CD4-positive, alpha-beta T cell (primary cell): ENCODE measurements at regions of chr6 and their contacts with region 1.

Region 1: DNA sequence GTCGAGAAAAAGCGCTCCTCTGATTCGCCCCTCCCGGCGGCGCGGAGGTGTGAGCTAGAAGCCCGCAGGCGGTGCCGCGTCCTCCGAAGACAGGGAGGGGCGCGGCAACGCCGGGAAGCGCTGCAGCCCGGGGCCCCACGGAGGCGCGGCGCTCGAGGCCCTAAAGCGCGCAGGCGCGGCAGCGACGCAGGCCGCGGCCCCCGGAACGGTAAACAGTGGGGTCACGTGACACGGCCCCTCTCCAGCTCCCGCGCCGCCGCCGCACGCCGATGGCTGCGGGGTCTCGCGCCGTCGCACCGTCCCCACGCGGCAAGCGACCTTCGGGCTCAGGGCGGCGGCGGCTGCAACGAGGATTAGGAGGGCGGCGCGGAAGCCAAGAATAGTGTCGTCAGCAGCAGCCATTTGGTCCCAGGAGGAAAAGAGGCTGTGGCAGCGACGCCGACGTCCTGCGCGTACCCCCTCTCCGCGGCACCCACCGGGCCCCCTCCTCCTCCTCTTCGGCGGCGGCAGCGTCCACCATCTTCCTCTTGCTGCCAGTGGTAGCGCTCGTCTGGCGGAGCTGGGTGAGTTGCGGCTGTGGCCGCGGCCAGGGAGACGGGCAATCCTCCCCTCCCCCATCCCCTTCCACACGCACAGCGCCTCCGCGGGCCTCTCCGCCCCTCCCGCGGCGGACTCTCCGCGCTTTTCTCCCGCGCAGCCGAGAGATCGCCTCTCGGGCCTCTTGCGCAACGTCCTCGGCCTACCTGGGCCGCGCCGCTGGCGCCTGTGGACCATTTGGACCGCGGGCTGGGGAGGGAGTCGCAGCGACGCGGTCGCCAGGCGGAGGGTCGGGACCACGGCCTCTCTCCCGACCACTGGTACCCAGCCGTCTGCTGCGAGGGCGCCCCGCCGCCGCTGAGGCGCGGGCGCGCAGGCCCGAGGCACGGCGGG is at the start of gene PHF3:
- DNase-seq: peak; percentile 78 to 98 (median 88)
- ATAC-seq: peak; percentile 89
- H3K4me3 ChIP-seq: peak within 1 kb of the TSS; percentile 95
- H3K4me3 Mint-ChIP-seq: peak within 1 kb of the TSS; percentile 99
- H3K27ac ChIP-seq: peak within 1 kb of the TSS; percentile 93 to 97
- H3K27ac Mint-ChIP-seq: peak within 1 kb of the TSS; percentile 99
- H3K4me1 ChIP-seq: peaks cover 7% of the 10 kb centered on the region
- H3K4me1 Mint-ChIP-seq: peaks cover 56% of the 10 kb centered on the region
- H3K27me3 ChIP-seq: no peaks in the 10 kb centered on the region
- H3K27me3 Mint-ChIP-seq: no peaks in the 10 kb centered on the region
- CTCF ChIP-seq: no peak
- total RNA-seq, gene PHF3: 125 to 136 TPM

Region 2: DNA sequence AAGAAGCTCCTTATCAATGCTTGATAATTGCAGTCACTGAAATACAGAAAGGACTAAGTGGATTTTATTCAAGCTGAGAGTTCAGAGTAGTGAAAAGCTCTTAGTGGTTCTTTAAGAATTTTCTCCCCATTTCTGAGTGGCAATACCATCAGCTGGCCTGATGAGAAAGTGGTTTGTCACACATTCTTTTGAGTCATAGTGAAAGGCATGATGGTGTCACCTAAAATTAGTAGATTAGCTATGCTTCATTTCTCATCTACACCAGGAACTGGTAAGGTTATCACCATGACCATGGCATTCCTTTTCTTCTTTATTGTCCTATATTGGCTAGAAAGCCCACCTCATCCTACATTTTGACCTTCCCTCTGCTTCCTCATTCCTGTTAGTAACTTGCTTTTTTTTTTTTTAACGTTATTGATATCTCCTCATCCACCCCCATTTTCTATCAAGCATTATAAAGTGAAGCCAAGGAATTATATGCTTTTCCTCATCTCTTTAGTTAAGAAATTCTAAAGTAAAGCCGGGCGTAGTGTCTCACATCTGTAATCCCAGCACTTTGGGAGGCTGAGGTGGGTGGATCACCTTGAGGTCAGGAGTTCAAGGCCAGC is 131.0 kb before region 1 on chr6:
- CTCF ChIA-PET with region 1: no interaction called
- POLR2A ChIA-PET with region 1: no interaction called
- intact Hi-C with region 1: no loop called
- DNase-seq: no peak
- ATAC-seq: no peak
- H3K4me3 ChIP-seq: no peak overlapping the region
- H3K4me3 Mint-ChIP-seq: no peak overlapping the region
- H3K27ac ChIP-seq: no peak overlapping the region
- H3K27ac Mint-ChIP-seq: no peak overlapping the region
- H3K4me1 ChIP-seq: no peaks in the 10 kb centered on the region
- H3K4me1 Mint-ChIP-seq: no peaks in the 10 kb centered on the region
- H3K27me3 ChIP-seq: no peaks in the 10 kb centered on the region
- H3K27me3 Mint-ChIP-seq: peaks cover 10% of the 10 kb centered on the region
- CTCF ChIP-seq: no peak

Region 3: GRCh38 chr6:63571881-63572732 is 63.7 kb before region 1 on chr6 and contains the starts of genes LOC128125822 and PTP4A1:
- CTCF ChIA-PET with region 1: interaction called, 3 read pairs
- POLR2A ChIA-PET with region 1: interaction called, 107 read pairs
- intact Hi-C with region 1: loop called (anchors 1 kb)
- DNase-seq: peak; percentile 93 to 99 (median 96)
- ATAC-seq: peak; percentile 81
- H3K4me3 ChIP-seq: peak within 1 kb of the TSS; percentile 76
- H3K4me3 Mint-ChIP-seq: peak within 1 kb of the TSS; percentile 96
- H3K27ac ChIP-seq: peak within 1 kb of the TSS; percentile 96 to 97
- H3K27ac Mint-ChIP-seq: peak within 1 kb of the TSS; percentile 91
- H3K4me1 ChIP-seq: peaks cover 18% of the 10 kb centered on the region
- H3K4me1 Mint-ChIP-seq: peaks cover 45% of the 10 kb centered on the region
- H3K27me3 ChIP-seq: no peaks in the 10 kb centered on the region
- H3K27me3 Mint-ChIP-seq: no peaks in the 10 kb centered on the region
- CTCF ChIP-seq: no peak
- total RNA-seq, gene PTP4A1: 254 to 258 TPM

Region 4: GRCh38 chr6:63598049-63599036 is 37.5 kb before region 1 on chr6:
- CTCF ChIA-PET with region 1: interaction called, 18 read pairs
- POLR2A ChIA-PET with region 1: interaction called, 23 read pairs
- intact Hi-C with region 1: loop called in 1 of 2 experiments (anchors 5 kb)
- DNase-seq: peak; percentile 58 to 88 (median 67)
- ATAC-seq: peak; percentile 99
- H3K4me3 ChIP-seq: peak overlapping the region; percentile 53
- H3K4me3 Mint-ChIP-seq: peak overlapping the region; percentile 87
- H3K27ac ChIP-seq: no peak overlapping the region
- H3K27ac Mint-ChIP-seq: no peak overlapping the region
- H3K4me1 ChIP-seq: peaks cover 11% of the 10 kb centered on the region
- H3K4me1 Mint-ChIP-seq: peaks cover 15% of the 10 kb centered on the region
- H3K27me3 ChIP-seq: no peaks in the 10 kb centered on the region
- H3K27me3 Mint-ChIP-seq: peaks cover 18% of the 10 kb centered on the region
- CTCF ChIP-seq: peak; percentile 92

Region 5: GRCh38 chr6:63649847-63650265 is 14.0 kb after region 1 on chr6:
- CTCF ChIA-PET with region 1: interaction called, 5 read pairs
- POLR2A ChIA-PET with region 1: interaction called, 28 read pairs
- intact Hi-C with region 1: loop called in 1 of 2 experiments (anchors 2 kb)
- DNase-seq: no peak
- ATAC-seq: no peak
- H3K4me3 ChIP-seq: no peak overlapping the region
- H3K4me3 Mint-ChIP-seq: peak overlapping the region; percentile 42
- H3K27ac ChIP-seq: no peak overlapping the region
- H3K27ac Mint-ChIP-seq: no peak overlapping the region
- H3K4me1 ChIP-seq: peaks cover 15% of the 10 kb centered on the region
- H3K4me1 Mint-ChIP-seq: peaks cover 88% of the 10 kb centered on the region
- H3K27me3 ChIP-seq: no peaks in the 10 kb centered on the region
- H3K27me3 Mint-ChIP-seq: no peaks in the 10 kb centered on the region
- CTCF ChIP-seq: no peak

Region 6: GRCh38 chr6:63663147-63663877 is 27.5 kb after region 1 on chr6:
- CTCF ChIA-PET with region 1: no interaction called
- POLR2A ChIA-PET with region 1: interaction called, 23 read pairs
- intact Hi-C with region 1: no loop called
- DNase-seq: no peak
- ATAC-seq: no peak
- H3K4me3 ChIP-seq: no peak overlapping the region
- H3K4me3 Mint-ChIP-seq: no peak overlapping the region
- H3K27ac ChIP-seq: no peak overlapping the region
- H3K27ac Mint-ChIP-seq: no peak overlapping the region
- H3K4me1 ChIP-seq: peaks cover 24% of the 10 kb centered on the region
- H3K4me1 Mint-ChIP-seq: peaks cover 90% of the 10 kb centered on the region
- H3K27me3 ChIP-seq: no peaks in the 10 kb centered on the region
- H3K27me3 Mint-ChIP-seq: no peaks in the 10 kb centered on the region
- CTCF ChIP-seq: no peak

Region 7: GRCh38 chr6:63685446-63686379 is 49.9 kb after region 1 on chr6:
- CTCF ChIA-PET with region 1: interaction called, 4 read pairs
- POLR2A ChIA-PET with region 1: interaction called, 12 read pairs
- intact Hi-C with region 1: loop called in 1 of 2 experiments (anchors 5 kb)
- DNase-seq: peak in 2 of 14 experiments; percentile 20 to 34
- ATAC-seq: no peak
- H3K4me3 ChIP-seq: no peak overlapping the region
- H3K4me3 Mint-ChIP-seq: no peak overlapping the region
- H3K27ac ChIP-seq: no peak overlapping the region
- H3K27ac Mint-ChIP-seq: no peak overlapping the region
- H3K4me1 ChIP-seq: no peaks in the 10 kb centered on the region
- H3K4me1 Mint-ChIP-seq: peaks cover 56% of the 10 kb centered on the region
- H3K27me3 ChIP-seq: no peaks in the 10 kb centered on the region
- H3K27me3 Mint-ChIP-seq: no peaks in the 10 kb centered on the region
- CTCF ChIP-seq: no peak

Region 8: DNA sequence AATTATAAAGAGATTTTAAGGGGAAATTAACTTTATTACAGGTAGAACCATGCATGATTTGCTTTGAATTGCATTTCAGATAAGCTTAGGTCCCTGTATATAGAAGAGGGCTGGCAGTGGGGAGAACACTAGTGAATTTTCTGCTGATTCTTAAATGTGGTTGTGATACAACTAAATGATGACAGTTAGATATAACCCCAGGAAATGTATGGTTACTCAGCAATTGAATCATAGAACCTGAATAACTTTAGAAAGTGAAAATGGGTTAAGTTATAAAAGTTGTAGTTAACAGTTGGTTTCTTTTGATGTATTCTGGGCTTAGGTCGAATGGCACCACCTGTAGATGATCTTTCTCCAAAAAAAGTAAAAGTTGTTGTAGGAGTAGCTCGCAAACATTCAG is 69.9 kb after region 1 on chr6:
- CTCF ChIA-PET with region 1: no interaction called
- POLR2A ChIA-PET with region 1: interaction called, 4 read pairs
- intact Hi-C with region 1: loop called in 1 of 2 experiments (anchors 5 kb)
- DNase-seq: no peak
- ATAC-seq: no peak
- H3K4me3 ChIP-seq: no peak overlapping the region
- H3K4me3 Mint-ChIP-seq: no peak overlapping the region
- H3K27ac ChIP-seq: no peak overlapping the region
- H3K27ac Mint-ChIP-seq: peak overlapping the region; percentile 27
- H3K4me1 ChIP-seq: no peaks in the 10 kb centered on the region
- H3K4me1 Mint-ChIP-seq: no peaks in the 10 kb centered on the region
- H3K27me3 ChIP-seq: no peaks in the 10 kb centered on the region
- H3K27me3 Mint-ChIP-seq: no peaks in the 10 kb centered on the region
- CTCF ChIP-seq: no peak